B cell (primary cell): ENCODE measurements at regions of chr2 and their contacts with region 1.

Region 1: GRCh38 chr2:24971536-24972314 is at the start of gene DNAJC27:
- DNase-seq: peak; percentile 99
- ATAC-seq: peak; percentile 90
- H3K4me3 ChIP-seq: peak within 1 kb of the TSS; percentile 73 to 85 (median 82)
- H3K4me3 Mint-ChIP-seq: peak within 1 kb of the TSS; percentile 97
- H3K27ac ChIP-seq: peak within 1 kb of the TSS; percentile 97 to 100
- H3K27ac Mint-ChIP-seq: peak within 1 kb of the TSS; percentile 100
- H3K4me1 ChIP-seq: peaks cover 8 to 15% of the 10 kb centered on the region in 2 donors
- H3K4me1 Mint-ChIP-seq: peaks cover 14% of the 10 kb centered on the region
- H3K27me3 ChIP-seq: no peaks in the 10 kb centered on the region
- H3K27me3 Mint-ChIP-seq: no peaks in the 10 kb centered on the region
- CTCF ChIP-seq: no peak
- total RNA-seq, gene DNAJC27: 15.6 and 16.6 TPM in 2 replicates

Region 2: DNA sequence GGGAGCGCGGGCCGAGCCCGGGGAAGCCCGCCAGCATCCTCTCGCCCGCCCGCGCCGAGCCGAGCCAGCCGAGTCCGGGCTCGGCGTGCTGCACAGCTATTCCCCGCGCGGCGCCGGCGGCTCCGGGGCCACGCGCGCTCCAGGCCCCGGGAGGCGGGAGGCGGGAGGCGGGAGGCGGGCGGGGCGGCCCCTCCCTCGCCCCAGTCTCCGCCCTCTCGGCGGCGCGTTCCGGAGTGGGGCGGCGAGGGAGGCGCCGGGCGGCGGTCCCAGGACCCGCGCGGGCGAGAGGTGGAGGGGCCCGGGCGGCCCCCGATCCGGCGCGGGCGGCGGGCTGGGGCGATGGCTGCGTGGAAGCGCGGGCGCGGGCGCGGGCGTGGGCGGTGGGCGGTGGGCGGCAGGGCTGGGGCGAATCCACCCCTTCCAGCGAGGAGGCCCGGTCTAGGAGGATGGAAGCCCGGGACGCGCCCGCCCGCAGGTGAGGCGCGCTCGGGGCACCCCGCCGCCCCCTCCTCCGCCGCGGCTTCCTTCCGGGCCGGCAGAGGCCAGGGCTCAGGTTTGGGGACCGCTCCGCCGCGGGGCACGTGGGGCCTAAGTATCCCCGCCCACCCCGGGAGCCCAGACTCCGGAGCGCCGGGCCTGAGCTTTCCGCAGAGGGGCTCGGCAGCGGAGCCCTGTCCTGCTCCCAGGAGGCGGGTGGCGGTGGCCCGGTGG is 51.5 kb before region 1 on chr2 and contains the start of gene ADCY3:
- CTCF ChIA-PET with region 1: interaction called, 3 read pairs
- POLR2A ChIA-PET with region 1: no interaction called
- intact Hi-C with region 1: loop called (anchors 1 kb)
- DNase-seq: peak; percentile 73
- ATAC-seq: peak; percentile 79
- H3K4me3 ChIP-seq: peak within 1 kb of the TSS; percentile 23 to 66 (median 56)
- H3K4me3 Mint-ChIP-seq: peak within 1 kb of the TSS; percentile 94
- H3K27ac ChIP-seq: no peak within 1 kb of the TSS
- H3K27ac Mint-ChIP-seq: peak within 1 kb of the TSS; percentile 79
- H3K4me1 ChIP-seq: peaks cover 10 to 16% of the 10 kb centered on the region in 2 donors
- H3K4me1 Mint-ChIP-seq: peaks cover 23% of the 10 kb centered on the region
- H3K27me3 ChIP-seq: no peaks in the 10 kb centered on the region
- H3K27me3 Mint-ChIP-seq: no peaks in the 10 kb centered on the region
- CTCF ChIP-seq: no peak
- total RNA-seq, gene ADCY3: 48.2 and 48.4 TPM in 2 replicates

Region 3: GRCh38 chr2:24930768-24931167 is 41.0 kb before region 1 on chr2:
- CTCF ChIA-PET with region 1: no interaction called
- POLR2A ChIA-PET with region 1: no interaction called
- intact Hi-C with region 1: no loop called
- DNase-seq: no peak
- ATAC-seq: no peak
- H3K4me3 ChIP-seq: no peak overlapping the region
- H3K4me3 Mint-ChIP-seq: no peak overlapping the region
- H3K27ac ChIP-seq: no peak overlapping the region
- H3K27ac Mint-ChIP-seq: no peak overlapping the region
- H3K4me1 ChIP-seq: peaks cover 7 to 18% of the 10 kb centered on the region in 2 donors
- H3K4me1 Mint-ChIP-seq: peaks cover 15% of the 10 kb centered on the region
- H3K27me3 ChIP-seq: peaks cover 0 to 11% (median 7%) of the 10 kb centered on the region in 4 experiments
- H3K27me3 Mint-ChIP-seq: peaks cover 3% of the 10 kb centered on the region
- CTCF ChIP-seq: no peak

Region 4: GRCh38 chr2:24984912-24985311 is 13.2 kb after region 1 on chr2:
- CTCF ChIA-PET with region 1: no interaction called
- POLR2A ChIA-PET with region 1: no interaction called
- intact Hi-C with region 1: no loop called
- DNase-seq: no peak
- ATAC-seq: no peak
- H3K4me3 ChIP-seq: no peak overlapping the region
- H3K4me3 Mint-ChIP-seq: no peak overlapping the region
- H3K27ac ChIP-seq: no peak overlapping the region
- H3K27ac Mint-ChIP-seq: no peak overlapping the region
- H3K4me1 ChIP-seq: no peaks in the 10 kb centered on the region
- H3K4me1 Mint-ChIP-seq: no peaks in the 10 kb centered on the region
- H3K27me3 ChIP-seq: no peaks in the 10 kb centered on the region
- H3K27me3 Mint-ChIP-seq: peaks cover 12% of the 10 kb centered on the region
- CTCF ChIP-seq: no peak

Region 5: DNA sequence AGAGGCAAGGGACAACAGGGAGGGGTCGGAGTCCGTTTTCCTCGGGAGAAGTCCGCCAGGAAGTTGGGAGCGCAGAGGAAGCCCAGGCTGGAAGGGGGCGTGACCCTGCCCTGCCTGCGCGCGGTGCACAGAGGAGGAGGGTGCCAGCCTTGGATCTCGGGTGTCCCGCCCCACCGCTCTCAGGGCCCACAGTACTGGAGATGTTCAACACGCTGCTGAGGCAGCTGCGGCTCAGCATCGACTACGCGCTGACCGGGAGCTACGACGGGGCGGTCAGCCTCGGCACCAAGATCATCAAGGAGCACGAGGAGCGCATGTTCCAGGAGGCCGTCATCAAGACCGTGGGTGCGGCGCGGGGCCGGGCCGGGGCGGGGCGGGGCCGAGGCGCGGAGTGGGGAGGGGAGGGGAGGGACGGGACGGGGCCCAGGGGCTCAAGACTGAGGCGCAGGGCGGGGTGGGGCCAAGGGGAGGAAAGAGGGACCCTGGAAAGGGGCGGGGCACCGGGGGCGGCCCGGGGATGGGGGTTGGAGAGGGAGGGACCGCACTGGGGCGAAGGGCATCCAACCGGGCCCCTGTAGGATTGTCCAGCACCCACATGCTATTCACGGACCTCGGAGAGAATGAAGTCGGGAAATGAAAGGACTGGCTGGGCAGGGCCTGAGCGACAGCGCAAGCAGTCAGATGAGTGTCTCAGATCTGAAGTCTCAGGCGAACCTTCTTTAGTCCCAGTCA is 160.0 kb after region 1 on chr2:
- CTCF ChIA-PET with region 1: interaction called, 40 read pairs
- POLR2A ChIA-PET with region 1: interaction called, 3 read pairs
- intact Hi-C with region 1: loop called (anchors 1 kb)
- DNase-seq: peak; percentile 42
- ATAC-seq: no peak
- H3K4me3 ChIP-seq: peak overlapping the region in 3 of 5 experiments; percentile 8 to 39 (median 23)
- H3K4me3 Mint-ChIP-seq: peak overlapping the region; percentile 81
- H3K27ac ChIP-seq: no peak overlapping the region
- H3K27ac Mint-ChIP-seq: no peak overlapping the region
- H3K4me1 ChIP-seq: peaks cover 11 to 18% of the 10 kb centered on the region in 2 donors
- H3K4me1 Mint-ChIP-seq: peaks cover 16% of the 10 kb centered on the region
- H3K27me3 ChIP-seq: peaks cover 0 to 41% (median 22%) of the 10 kb centered on the region in 4 experiments
- H3K27me3 Mint-ChIP-seq: peaks cover 53% of the 10 kb centered on the region
- CTCF ChIP-seq: no peak

Region 6: GRCh38 chr2:25197336-25198208 is 225.8 kb after region 1 on chr2:
- CTCF ChIA-PET with region 1: interaction called, 13 read pairs
- POLR2A ChIA-PET with region 1: no interaction called
- intact Hi-C with region 1: loop called (anchors 1 kb)
- DNase-seq: no peak
- ATAC-seq: no peak
- H3K4me3 ChIP-seq: no peak overlapping the region
- H3K4me3 Mint-ChIP-seq: no peak overlapping the region
- H3K27ac ChIP-seq: no peak overlapping the region
- H3K27ac Mint-ChIP-seq: no peak overlapping the region
- H3K4me1 ChIP-seq: peaks cover 6 to 14% of the 10 kb centered on the region in 2 donors
- H3K4me1 Mint-ChIP-seq: peaks cover 14% of the 10 kb centered on the region
- H3K27me3 ChIP-seq: peaks cover 0 to 6% (median 1%) of the 10 kb centered on the region in 4 experiments
- H3K27me3 Mint-ChIP-seq: no peaks in the 10 kb centered on the region
- CTCF ChIP-seq: no peak

Region 7: GRCh38 chr2:25673300-25674076 is 701.8 kb after region 1 on chr2 and contains the start of gene DTNB:
- CTCF ChIA-PET with region 1: no interaction called
- POLR2A ChIA-PET with region 1: no interaction called
- intact Hi-C with region 1: loop called (anchors 10 kb)
- DNase-seq: peak; percentile 89
- ATAC-seq: peak; percentile 74
- H3K4me3 ChIP-seq: peak within 1 kb of the TSS; percentile 75 to 85 (median 82)
- H3K4me3 Mint-ChIP-seq: peak within 1 kb of the TSS; percentile 94
- H3K27ac ChIP-seq: peak within 1 kb of the TSS; percentile 59 to 71
- H3K27ac Mint-ChIP-seq: peak within 1 kb of the TSS; percentile 91
- H3K4me1 ChIP-seq: peaks cover 8 to 16% of the 10 kb centered on the region in 2 donors
- H3K4me1 Mint-ChIP-seq: peaks cover 16% of the 10 kb centered on the region
- H3K27me3 ChIP-seq: peaks cover 0 to 2% (median 0%) of the 10 kb centered on the region in 4 experiments
- H3K27me3 Mint-ChIP-seq: no peaks in the 10 kb centered on the region
- CTCF ChIP-seq: no peak
- total RNA-seq, gene DTNB: 37.3 and 45.8 TPM in 2 replicates

Region 8: DNA sequence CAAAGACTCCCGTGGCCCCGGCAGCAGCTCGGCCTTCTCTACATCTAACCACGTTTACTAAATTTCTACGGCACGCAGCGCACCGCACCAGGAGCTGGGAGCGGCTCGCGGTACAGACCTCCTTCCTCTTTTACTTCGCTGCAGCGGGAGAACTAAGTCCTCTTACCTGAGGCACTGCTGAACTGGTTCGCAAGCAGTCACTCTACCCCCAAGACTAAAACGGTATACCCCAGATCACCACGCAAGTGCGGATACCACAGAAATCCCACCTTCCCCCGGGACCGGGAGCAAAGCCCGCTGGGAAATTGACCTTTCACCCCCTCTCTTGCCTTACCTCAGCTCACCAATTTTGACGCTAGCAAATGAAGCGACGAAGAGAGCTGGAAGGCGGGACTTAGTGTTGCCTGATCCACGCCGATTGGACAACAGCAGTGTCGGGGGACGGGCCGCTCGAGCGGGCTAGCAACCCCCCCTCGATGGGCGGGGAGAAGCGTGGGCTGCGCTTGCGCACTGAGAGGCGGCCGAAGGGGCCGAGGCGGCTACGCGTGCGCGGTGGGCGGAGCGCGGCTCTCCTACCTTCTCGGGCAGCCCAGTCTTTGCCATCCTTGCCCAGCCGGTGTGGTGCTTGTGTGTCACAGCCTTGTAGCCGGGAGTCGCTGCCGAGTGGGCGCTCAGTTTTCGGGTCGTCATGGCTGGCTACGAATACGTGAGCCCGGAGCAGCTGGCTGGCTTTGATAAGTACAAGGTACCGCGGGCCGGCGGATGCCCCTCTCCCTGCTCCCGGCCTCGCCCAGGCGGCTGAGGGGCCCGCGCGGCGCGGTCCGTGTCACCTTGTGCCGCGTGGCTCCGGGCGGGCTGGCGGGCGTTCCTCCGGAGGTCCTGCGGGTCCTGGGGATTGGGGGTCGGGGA is 1374.1 kb after region 1 on chr2 and contains the start of gene SELENOI:
- CTCF ChIA-PET with region 1: no interaction called
- POLR2A ChIA-PET with region 1: no interaction called
- intact Hi-C with region 1: loop called (anchors 5 kb)
- DNase-seq: peak; percentile 100
- ATAC-seq: peak; percentile 96
- H3K4me3 ChIP-seq: peak within 1 kb of the TSS; percentile 64 to 95 (median 86)
- H3K4me3 Mint-ChIP-seq: peak within 1 kb of the TSS; percentile 100
- H3K27ac ChIP-seq: peak within 1 kb of the TSS; percentile 83 to 92
- H3K27ac Mint-ChIP-seq: peak within 1 kb of the TSS; percentile 99
- H3K4me1 ChIP-seq: peaks cover 18 to 20% of the 10 kb centered on the region in 2 donors
- H3K4me1 Mint-ChIP-seq: peaks cover 35% of the 10 kb centered on the region
- H3K27me3 ChIP-seq: no peaks in the 10 kb centered on the region
- H3K27me3 Mint-ChIP-seq: no peaks in the 10 kb centered on the region
- CTCF ChIP-seq: no peak
- total RNA-seq, gene SELENOI: 20.0 and 20.1 TPM in 2 replicates